H1 (cell line): ENCODE measurements at regions of chr1 and their contacts with region 1.

Region 1: GRCh38 chr1:209627732-209628196 is 24.5 kb downstream of the LAMB3 start:
- DNase-seq: peak; percentile 75 to 98
- H3K4me3 ChIP-seq: no peak overlapping the region
- H3K27ac ChIP-seq: no peak overlapping the region
- H3K4me1 ChIP-seq: peaks cover 0 to 15% (median 9%) of the 10 kb centered on the region in 4 experiments; a peak in 4 of 7 replicates
- H3K27me3 ChIP-seq: no peaks in the 10 kb centered on the region
- CTCF ChIP-seq: peak; percentile 98
- EP300 ChIP-seq: no peak
- POLR2A ChIP-seq: no peak
- RAD21 ChIP-seq: peak; percentile 94 to 96

Region 2: GRCh38 chr1:209519786-209520185 is 108.0 kb before region 1 on chr1:
- CTCF ChIA-PET with region 1: no interaction called
- POLR2A ChIA-PET with region 1: no interaction called
- DNase-seq: peak in 1 of 2 experiments; percentile 23
- H3K4me3 ChIP-seq: no peak overlapping the region
- H3K27ac ChIP-seq: no peak overlapping the region
- H3K4me1 ChIP-seq: no peaks in the 10 kb centered on the region
- H3K27me3 ChIP-seq: peaks cover 0 to 1% (median 0%) of the 10 kb centered on the region in 4 experiments; a peak in 1 of 7 replicates
- CTCF ChIP-seq: no peak
- EP300 ChIP-seq: no peak
- POLR2A ChIP-seq: no peak
- RAD21 ChIP-seq: no peak

Region 3: DNA sequence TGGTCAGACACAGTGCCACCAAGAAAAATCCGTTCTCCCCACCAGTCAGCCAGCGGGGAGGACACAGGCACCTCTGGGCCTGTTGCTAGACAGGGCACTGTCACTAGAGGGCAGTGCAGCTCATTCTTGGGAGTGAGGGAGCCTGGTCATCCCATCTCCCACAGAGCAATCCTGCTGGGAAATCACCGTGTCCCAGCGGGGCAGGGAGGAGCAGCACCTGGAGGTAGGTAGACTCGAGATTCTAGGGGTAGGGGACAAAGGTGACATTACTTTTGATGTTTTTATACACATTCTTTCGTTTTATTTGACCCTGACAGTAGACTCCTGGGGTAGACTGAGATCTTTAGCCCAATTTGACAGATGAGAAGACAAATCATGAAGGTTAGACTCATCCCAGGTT is 51.0 kb before region 1 on chr1:
- CTCF ChIA-PET with region 1: interaction called, 209 read pairs
- POLR2A ChIA-PET with region 1: no interaction called
- DNase-seq: peak; percentile 27 to 94
- H3K4me3 ChIP-seq: no peak overlapping the region
- H3K27ac ChIP-seq: no peak overlapping the region
- H3K4me1 ChIP-seq: peaks cover 0 to 4% (median 0%) of the 10 kb centered on the region in 4 experiments; a peak in 1 of 7 replicates
- H3K27me3 ChIP-seq: no peaks in the 10 kb centered on the region
- CTCF ChIP-seq: peak; percentile 88 to 98 (median 92)
- EP300 ChIP-seq: no peak
- POLR2A ChIP-seq: no peak
- RAD21 ChIP-seq: peak; percentile 86 to 89

Region 4: GRCh38 chr1:209585672-209586071 is 42.1 kb before region 1 on chr1:
- CTCF ChIA-PET with region 1: interaction called, 209 read pairs
- POLR2A ChIA-PET with region 1: no interaction called
- DNase-seq: peak in 1 of 2 experiments; percentile 66
- H3K4me3 ChIP-seq: peak overlapping the region; percentile 22 to 45 (median 38); a peak in 7 of 8 replicates
- H3K27ac ChIP-seq: no peak overlapping the region
- H3K4me1 ChIP-seq: peaks cover 0 to 14% (median 9%) of the 10 kb centered on the region in 4 experiments; a peak in 5 of 7 replicates
- H3K27me3 ChIP-seq: peaks cover 0 to 27% (median 17%) of the 10 kb centered on the region in 4 experiments; a peak in 6 of 7 replicates
- CTCF ChIP-seq: no peak
- EP300 ChIP-seq: no peak
- POLR2A ChIP-seq: no peak
- RAD21 ChIP-seq: no peak

Region 5: GRCh38 chr1:209601809-209602657 is 25.7 kb before region 1 on chr1:
- CTCF ChIA-PET with region 1: interaction called, 365 read pairs
- POLR2A ChIA-PET with region 1: no interaction called
- DNase-seq: no peak
- H3K4me3 ChIP-seq: no peak overlapping the region
- H3K27ac ChIP-seq: no peak overlapping the region
- H3K4me1 ChIP-seq: no peaks in the 10 kb centered on the region
- H3K27me3 ChIP-seq: no peaks in the 10 kb centered on the region
- CTCF ChIP-seq: peak; percentile 75 to 86 (median 84)
- EP300 ChIP-seq: no peak
- POLR2A ChIP-seq: no peak
- RAD21 ChIP-seq: peak; percentile 83 to 84

Region 6: DNA sequence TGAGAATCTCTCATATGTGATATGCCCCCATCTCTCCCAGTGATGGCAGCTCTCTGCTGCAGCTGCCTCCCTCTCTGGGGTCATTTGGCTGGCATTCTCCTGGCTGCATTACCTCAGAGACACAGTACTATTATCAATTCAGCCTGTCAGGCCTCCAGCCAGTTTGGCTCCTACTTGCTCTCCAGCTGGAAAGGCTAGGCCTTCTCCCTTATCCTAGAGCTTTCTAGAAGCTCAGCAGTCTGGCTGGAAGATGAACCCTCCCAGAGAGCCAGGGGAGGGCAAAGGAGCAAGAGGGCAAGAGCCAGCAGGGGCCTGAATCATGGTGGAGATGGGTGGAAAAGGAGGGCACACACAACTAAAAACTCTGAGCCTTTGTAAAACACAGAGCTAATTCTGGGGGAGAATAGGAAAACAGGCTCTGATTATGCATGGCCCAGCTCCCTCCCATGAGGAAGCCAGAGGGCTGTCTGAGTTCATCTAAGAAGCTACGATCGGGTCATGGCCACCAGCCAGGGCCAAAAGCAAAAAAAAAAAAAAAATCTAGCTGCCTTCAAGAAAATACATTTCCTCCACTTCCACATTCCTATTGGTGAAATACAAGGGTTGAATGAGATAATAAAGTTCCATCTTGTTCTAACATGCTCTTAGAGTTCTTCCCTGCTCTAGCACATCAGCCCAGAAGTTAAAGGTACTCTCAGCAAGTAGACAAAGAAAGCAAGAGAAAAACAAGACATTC is 15.7 kb after region 1 on chr1:
- CTCF ChIA-PET with region 1: interaction called, 21 read pairs
- POLR2A ChIA-PET with region 1: interaction called, 3 read pairs
- DNase-seq: no peak
- H3K4me3 ChIP-seq: no peak overlapping the region
- H3K27ac ChIP-seq: no peak overlapping the region
- H3K4me1 ChIP-seq: 0 out of 7 replicates have a peak, but pooled peaks cover 0 to 5% (median 0%) of the 10 kb centered on the region in 4 experiments
- H3K27me3 ChIP-seq: no peaks in the 10 kb centered on the region
- CTCF ChIP-seq: no peak
- EP300 ChIP-seq: no peak
- POLR2A ChIP-seq: no peak
- RAD21 ChIP-seq: no peak

Region 7: DNA sequence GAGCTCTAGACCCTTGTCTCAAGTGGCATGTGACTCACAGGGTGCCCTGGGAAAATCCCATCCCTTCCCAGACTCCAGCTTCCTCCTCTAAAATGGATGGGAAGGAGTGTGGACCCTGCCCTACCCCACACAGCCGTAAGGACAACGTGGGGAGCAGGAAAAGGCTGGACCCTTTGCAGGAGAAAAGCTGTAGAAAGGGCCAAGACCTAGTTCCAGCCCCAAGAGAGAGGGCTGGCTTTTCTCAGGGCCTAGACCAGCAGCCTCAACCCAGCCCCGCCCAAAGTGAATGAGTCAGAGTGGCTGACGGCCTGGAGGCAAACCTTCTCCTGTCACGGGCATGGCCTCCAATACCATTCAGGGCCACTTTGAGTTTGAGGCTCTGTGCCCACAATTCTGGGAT is 23.4 kb after region 1 on chr1:
- CTCF ChIA-PET with region 1: interaction called, 10 read pairs
- POLR2A ChIA-PET with region 1: no interaction called
- DNase-seq: no peak
- H3K4me3 ChIP-seq: no peak overlapping the region
- H3K27ac ChIP-seq: no peak overlapping the region
- H3K4me1 ChIP-seq: peaks cover 0 to 11% (median 10%) of the 10 kb centered on the region in 4 experiments; a peak in 4 of 7 replicates
- H3K27me3 ChIP-seq: 0 out of 7 replicates have a peak, but pooled peaks cover 0 to 1% (median 0%) of the 10 kb centered on the region in 4 experiments
- CTCF ChIP-seq: no peak
- EP300 ChIP-seq: no peak
- POLR2A ChIP-seq: no peak
- RAD21 ChIP-seq: no peak

Region 8: DNA sequence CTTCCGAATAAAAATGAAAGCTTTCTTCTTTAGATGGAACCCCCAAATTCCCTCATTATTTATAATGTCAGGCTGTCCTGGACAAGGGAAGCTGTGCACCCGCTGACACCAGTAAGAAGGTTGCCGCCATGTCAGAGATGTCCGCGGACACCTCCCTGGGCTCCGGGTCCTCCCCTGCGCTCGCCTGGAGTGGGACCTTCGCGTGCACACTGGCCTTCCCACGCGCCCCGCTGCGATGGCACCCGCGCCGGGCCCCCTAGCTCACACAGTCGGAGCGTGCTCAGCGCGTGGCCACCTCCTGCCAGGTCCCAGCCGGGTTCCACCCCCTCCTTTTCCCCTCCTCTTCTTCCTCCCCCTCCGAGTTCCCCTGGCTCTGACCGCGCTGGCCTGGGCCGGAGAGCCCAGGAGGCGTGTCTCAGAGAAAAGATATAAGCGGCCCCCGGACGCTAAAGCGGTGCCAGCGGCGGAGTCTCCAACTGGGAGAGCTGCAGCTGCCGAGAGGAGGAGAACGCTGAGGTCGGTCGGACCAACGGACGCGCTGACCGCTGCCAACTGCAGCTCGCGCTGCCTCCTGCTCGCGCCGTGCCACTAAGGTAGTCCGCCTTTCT is 47.3 kb after region 1 on chr1 and contains the start of gene G0S2:
- CTCF ChIA-PET with region 1: interaction called, 4 read pairs
- POLR2A ChIA-PET with region 1: interaction called, 10 read pairs
- DNase-seq: peak in 1 of 2 experiments; percentile 71
- H3K4me3 ChIP-seq: peak within 1 kb of the TSS; percentile 40 to 64 (median 56)
- H3K27ac ChIP-seq: no peak within 1 kb of the TSS
- H3K4me1 ChIP-seq: peaks cover 0 to 4% (median 3%) of the 10 kb centered on the region in 4 experiments; a peak in 6 of 7 replicates
- H3K27me3 ChIP-seq: peaks cover 18 to 46% (median 42%) of the 10 kb centered on the region in 4 experiments
- CTCF ChIP-seq: no peak
- EP300 ChIP-seq: no peak
- POLR2A ChIP-seq: no peak
- RAD21 ChIP-seq: no peak
- total RNA-seq, gene G0S2: 1.0 and 1.7 TPM in 2 replicates

Region 9: GRCh38 chr1:209742409-209743144 is 114.8 kb after region 1 on chr1:
- CTCF ChIA-PET with region 1: no interaction called
- POLR2A ChIA-PET with region 1: no interaction called
- DNase-seq: no peak
- H3K4me3 ChIP-seq: no peak overlapping the region
- H3K27ac ChIP-seq: no peak overlapping the region
- H3K4me1 ChIP-seq: 0 out of 7 replicates have a peak, but pooled peaks cover 0 to 3% (median 0%) of the 10 kb centered on the region in 4 experiments
- H3K27me3 ChIP-seq: no peaks in the 10 kb centered on the region; a peak in 1 of 7 replicates
- CTCF ChIP-seq: no peak
- EP300 ChIP-seq: no peak
- POLR2A ChIP-seq: no peak
- RAD21 ChIP-seq: no peak